ENCODE measurements at regions of chr3 and their contacts with region 1.

Region 1: GRCh38 chr3:143471705-143472104 is 352.1 kb downstream of the CHST2 start:
- DNase-seq: no peak
- H3K4me3 ChIP-seq: no peak overlapping the region
- H3K27ac ChIP-seq: no peak overlapping the region
- H3K4me1 ChIP-seq: no peaks in the 10 kb centered on the region
- H3K27me3 ChIP-seq: no peaks in the 10 kb centered on the region
- CTCF ChIP-seq: no peak
- EP300 ChIP-seq: no peak
- POLR2A ChIP-seq: no peak

Region 2: GRCh38 chr3:143521803-143522202 is 50.1 kb after region 1 on chr3:
- intact Hi-C with region 1: no loop called
- DNase-seq: no peak
- H3K4me3 ChIP-seq: no peak overlapping the region
- H3K27ac ChIP-seq: no peak overlapping the region
- H3K4me1 ChIP-seq: no peaks in the 10 kb centered on the region
- H3K27me3 ChIP-seq: no peaks in the 10 kb centered on the region
- CTCF ChIP-seq: no peak
- EP300 ChIP-seq: no peak
- POLR2A ChIP-seq: no peak

Region 3: DNA sequence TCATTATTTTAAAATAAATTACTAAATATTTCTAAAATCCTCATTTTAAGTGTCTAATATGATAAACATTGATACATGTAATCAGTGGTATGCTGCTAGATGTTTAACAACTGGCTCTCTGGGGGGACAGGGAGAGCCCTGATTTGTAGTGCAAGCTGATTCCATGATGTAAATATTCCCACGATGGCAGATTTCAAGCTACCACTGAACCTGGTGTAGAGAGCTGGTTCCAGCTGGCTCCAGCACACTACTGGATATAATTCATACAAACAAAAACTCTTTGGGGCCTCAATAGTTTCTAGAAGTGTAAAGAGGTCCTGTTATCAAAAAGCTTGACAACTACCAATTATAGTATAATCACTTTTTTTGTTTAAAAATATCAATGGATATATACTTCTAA is 60.4 kb after region 1 on chr3:
- intact Hi-C with region 1: loop called in 1 of 4 experiments (anchors 2 kb)
- DNase-seq: no peak
- H3K4me3 ChIP-seq: no peak overlapping the region
- H3K27ac ChIP-seq: no peak overlapping the region
- H3K4me1 ChIP-seq: peaks cover 6% of the 10 kb centered on the region
- H3K27me3 ChIP-seq: no peaks in the 10 kb centered on the region
- CTCF ChIP-seq: no peak
- EP300 ChIP-seq: no peak
- POLR2A ChIP-seq: no peak